Activated T-helper 1 cell treated with anti-CD3 and anti-CD28 coated beads, Interleukin-12 subunit alpha, Interleukin-12 subunit beta, Interleukin-2, Interleukin-4 antibody, amounts not matched to agents 30 ng/mL and 10 ng/mL and 1 ng/mL, durations not matched to agents 14 hours and 24 hours and 36 hours (primary cell): ENCODE measurements at regions of chr21 and their contacts with region 1.

Region 1: DNA sequence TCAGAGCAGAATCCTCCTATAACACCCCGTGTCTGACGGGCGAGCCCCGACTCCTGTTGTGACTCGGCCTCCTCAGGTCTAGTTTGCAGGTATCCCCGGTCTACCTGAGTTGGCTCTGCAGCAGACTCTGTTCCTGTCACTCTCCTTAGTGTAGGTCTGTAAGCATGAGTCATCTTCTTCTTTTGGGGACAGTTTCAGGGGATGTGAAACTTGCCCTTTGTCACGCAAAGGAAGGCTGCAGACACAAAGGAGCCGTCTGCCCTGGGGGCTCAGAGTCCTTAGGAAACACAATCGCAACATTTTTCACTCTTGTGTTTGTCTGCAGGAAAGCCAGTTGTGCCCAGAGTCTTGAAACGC is 183.2 kb downstream of the RUNX1 start:
- DNase-seq: peak; percentile 23
- H3K4me3 Mint-ChIP-seq: peak overlapping the region; percentile 65
- H3K27ac Mint-ChIP-seq: peak overlapping the region; percentile 38
- H3K4me1 Mint-ChIP-seq: peaks cover 68% of the 10 kb centered on the region
- H3K27me3 Mint-ChIP-seq: no peaks in the 10 kb centered on the region

Region 2: GRCh38 chr21:34881894-34882371 is 16.0 kb after region 1 on chr21:
- intact Hi-C with region 1: loop called (anchors 2 kb)
- DNase-seq: no peak
- H3K4me3 Mint-ChIP-seq: peak overlapping the region; percentile 67
- H3K27ac Mint-ChIP-seq: peak overlapping the region; percentile 36
- H3K4me1 Mint-ChIP-seq: peaks cover 74% of the 10 kb centered on the region
- H3K27me3 Mint-ChIP-seq: no peaks in the 10 kb centered on the region

Region 3: DNA sequence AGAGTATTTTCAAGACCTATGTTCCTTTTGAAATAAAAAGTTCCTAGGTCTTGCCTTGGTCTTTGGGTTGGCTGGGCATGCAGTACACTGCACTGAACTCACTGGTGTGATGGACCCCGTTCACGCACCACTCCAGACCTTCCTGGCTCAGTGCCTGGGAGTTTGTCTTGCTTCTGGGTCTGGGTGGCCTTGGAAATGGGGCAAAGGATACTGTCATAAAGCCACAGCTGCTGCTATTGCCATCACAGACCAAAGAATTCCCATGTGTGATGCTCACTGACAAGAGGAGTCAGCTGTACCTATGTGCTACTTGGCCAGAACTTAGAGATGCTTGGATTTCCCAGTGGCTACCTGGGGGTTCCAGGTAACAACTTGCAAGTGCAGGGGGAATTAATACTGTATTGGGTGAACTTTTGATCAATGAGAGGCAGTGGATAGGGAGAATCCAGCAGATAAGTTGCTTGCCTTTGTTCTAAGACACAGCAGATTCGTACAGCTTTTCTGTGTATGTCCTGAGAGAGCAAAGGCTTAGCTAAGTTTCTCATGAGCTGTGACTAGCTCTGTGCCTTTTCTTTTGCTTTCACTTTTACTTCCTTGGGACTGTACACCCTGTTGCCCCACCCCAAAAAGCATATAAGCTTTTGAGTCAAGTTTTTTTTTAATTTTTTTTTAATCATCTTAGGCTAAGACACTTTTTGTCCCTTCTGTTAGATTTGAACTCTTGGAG is 67.9 kb after region 1 on chr21:
- intact Hi-C with region 1: no loop called
- DNase-seq: peak; percentile 37
- H3K4me3 Mint-ChIP-seq: peak overlapping the region; percentile 75
- H3K27ac Mint-ChIP-seq: peak overlapping the region; percentile 95
- H3K4me1 Mint-ChIP-seq: peaks cover 86% of the 10 kb centered on the region
- H3K27me3 Mint-ChIP-seq: no peaks in the 10 kb centered on the region

Region 4: DNA sequence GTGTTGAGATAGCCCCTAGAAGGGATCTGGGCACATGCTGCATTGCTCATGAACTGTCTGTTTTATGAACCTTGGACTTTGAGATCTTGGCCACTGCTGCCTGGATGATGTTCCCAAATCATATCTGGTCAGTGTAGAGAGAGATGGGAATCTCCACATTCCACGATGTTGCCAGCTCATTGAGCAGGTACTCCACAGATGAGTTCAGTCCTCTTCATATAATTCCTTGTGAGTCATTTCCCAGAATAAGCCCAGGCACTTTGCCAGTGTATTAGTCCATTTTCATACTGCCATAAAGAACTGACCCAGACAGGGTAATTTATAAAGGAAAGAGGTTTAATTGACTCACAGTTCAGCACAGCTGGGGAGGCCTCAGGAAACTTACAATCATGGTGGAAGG is 437.2 kb after region 1 on chr21:
- intact Hi-C with region 1: no loop called
- DNase-seq: no peak
- H3K4me3 Mint-ChIP-seq: no peak overlapping the region
- H3K27ac Mint-ChIP-seq: no peak overlapping the region
- H3K4me1 Mint-ChIP-seq: no peaks in the 10 kb centered on the region
- H3K27me3 Mint-ChIP-seq: peaks cover 7% of the 10 kb centered on the region